WTC11 (cell line): ENCODE measurements at regions of chr1 and their contacts with region 1.

Region 1: DNA sequence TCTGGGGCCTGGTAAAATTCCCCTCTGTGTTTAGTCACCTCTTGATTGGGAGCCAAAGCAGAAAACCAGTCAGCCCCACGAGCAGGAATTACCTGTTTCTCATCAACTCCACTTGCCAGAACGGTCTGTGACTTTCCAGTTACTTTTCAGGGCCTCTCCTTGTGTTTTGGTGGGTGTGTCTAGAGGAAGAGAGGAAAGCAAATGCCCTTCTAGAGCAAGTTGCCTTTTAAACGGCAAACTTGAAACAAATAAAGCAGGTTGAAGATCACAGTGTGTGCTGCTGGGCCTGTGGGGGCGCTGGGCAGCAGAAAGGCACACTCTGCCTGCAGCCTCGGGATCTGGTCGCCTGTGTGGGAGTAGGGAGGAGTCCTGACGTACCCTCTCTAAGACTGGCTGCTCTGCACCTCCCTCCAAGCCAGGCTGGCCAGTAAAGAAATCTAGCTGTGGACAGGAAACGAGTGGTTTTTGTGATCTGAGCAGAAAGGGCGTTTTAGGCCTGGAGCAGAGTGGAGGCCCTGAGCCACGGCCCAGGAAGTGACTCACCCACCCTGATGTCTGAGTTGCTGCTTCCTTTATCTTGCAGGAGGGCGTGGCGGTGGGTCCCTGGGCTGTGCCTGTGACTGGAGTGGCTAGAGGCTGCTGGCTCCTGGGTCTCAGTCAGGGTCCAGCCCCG is 11.1 kb upstream of the S100A11 start:
- DNase-seq: peak; percentile 79
- ATAC-seq: peak; percentile 91
- H3K4me3 Mint-ChIP-seq: peak overlapping the region; percentile 63
- H3K27ac Mint-ChIP-seq: peak overlapping the region; percentile 99
- H3K4me1 Mint-ChIP-seq: peaks cover 42% of the 10 kb centered on the region
- H3K27me3 Mint-ChIP-seq: peaks cover 8% of the 10 kb centered on the region; the same call in 1 of the 2 replicates
- CTCF ChIP-seq: no peak

Region 2: GRCh38 chr1:151924679-151925587 is 122.9 kb before region 1 on chr1:
- CTCF ChIA-PET with region 1: no interaction called
- POLR2A ChIA-PET with region 1: no interaction called
- DNase-seq: no peak
- ATAC-seq: no peak
- H3K4me3 Mint-ChIP-seq: no peak overlapping the region
- H3K27ac Mint-ChIP-seq: 0 out of 2 replicates have a peak overlapping the region, but pooled peaks have one; percentile 21
- H3K4me1 Mint-ChIP-seq: peaks cover 19% of the 10 kb centered on the region
- H3K27me3 Mint-ChIP-seq: no peaks in the 10 kb centered on the region
- CTCF ChIP-seq: no peak

Region 3: DNA sequence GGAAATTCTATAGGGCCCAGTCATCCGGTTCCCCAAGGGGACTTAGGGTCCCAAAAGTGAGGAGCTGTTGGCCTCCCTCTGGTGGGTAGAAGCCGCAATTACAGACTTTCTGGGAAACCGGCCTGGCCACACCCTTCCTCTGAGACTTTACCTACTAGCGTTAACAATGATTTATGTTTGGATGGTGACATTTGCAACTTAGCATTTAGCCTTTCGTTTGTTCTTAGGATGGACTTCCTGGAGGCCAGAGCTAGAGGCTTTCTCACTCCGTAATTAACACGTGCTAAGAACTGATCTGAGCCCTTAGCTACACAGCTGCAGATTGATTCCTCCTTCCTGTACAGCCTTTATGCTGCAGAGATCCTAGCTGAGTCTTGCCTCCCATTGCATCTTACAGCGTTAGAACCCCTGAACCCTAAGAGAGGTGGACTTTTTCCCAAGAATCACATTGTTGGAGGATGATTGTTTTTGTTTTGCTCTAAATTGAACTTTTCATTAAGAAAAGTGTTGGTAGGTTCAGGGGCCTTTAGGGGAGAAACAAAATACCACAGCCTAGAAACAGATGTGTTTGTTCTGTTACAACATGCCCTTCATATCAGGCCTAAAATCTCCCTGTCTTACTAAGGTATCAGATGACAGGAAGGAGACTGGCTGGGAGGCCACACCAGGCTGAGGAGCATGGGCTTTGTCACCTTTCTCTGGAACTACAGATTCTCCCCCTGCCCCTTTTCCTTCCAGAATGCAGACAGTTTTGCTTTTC is 13.0 kb before region 1 on chr1:
- CTCF ChIA-PET with region 1: interaction called, 24 read pairs
- POLR2A ChIA-PET with region 1: interaction called, 5 read pairs
- DNase-seq: peak; percentile 76
- ATAC-seq: peak; percentile 71
- H3K4me3 Mint-ChIP-seq: peak overlapping the region; percentile 89
- H3K27ac Mint-ChIP-seq: peak overlapping the region; percentile 85
- H3K4me1 Mint-ChIP-seq: peaks cover 40% of the 10 kb centered on the region
- H3K27me3 Mint-ChIP-seq: peaks cover 9% of the 10 kb centered on the region
- CTCF ChIP-seq: peak; percentile 88

Region 4: GRCh38 chr1:152067150-152067549 is 19.3 kb after region 1 on chr1:
- CTCF ChIA-PET with region 1: interaction called, 19 read pairs
- POLR2A ChIA-PET with region 1: interaction called, 8 read pairs
- DNase-seq: no peak
- ATAC-seq: no peak
- H3K4me3 Mint-ChIP-seq: no peak overlapping the region
- H3K27ac Mint-ChIP-seq: no peak overlapping the region
- H3K4me1 Mint-ChIP-seq: peaks cover 18% of the 10 kb centered on the region
- H3K27me3 Mint-ChIP-seq: peaks cover 14% of the 10 kb centered on the region
- CTCF ChIP-seq: no peak

Region 5: GRCh38 chr1:152110860-152111514 is 63.1 kb after region 1 on chr1:
- CTCF ChIA-PET with region 1: interaction called, 41 read pairs
- POLR2A ChIA-PET with region 1: interaction called, 4 read pairs
- DNase-seq: peak; percentile 34
- ATAC-seq: peak; percentile 14
- H3K4me3 Mint-ChIP-seq: no peak overlapping the region
- H3K27ac Mint-ChIP-seq: no peak overlapping the region
- H3K4me1 Mint-ChIP-seq: no peaks in the 10 kb centered on the region; the same call in 1 of the 2 replicates
- H3K27me3 Mint-ChIP-seq: no peaks in the 10 kb centered on the region; the same call in 1 of the 2 replicates
- CTCF ChIP-seq: no peak

Region 6: DNA sequence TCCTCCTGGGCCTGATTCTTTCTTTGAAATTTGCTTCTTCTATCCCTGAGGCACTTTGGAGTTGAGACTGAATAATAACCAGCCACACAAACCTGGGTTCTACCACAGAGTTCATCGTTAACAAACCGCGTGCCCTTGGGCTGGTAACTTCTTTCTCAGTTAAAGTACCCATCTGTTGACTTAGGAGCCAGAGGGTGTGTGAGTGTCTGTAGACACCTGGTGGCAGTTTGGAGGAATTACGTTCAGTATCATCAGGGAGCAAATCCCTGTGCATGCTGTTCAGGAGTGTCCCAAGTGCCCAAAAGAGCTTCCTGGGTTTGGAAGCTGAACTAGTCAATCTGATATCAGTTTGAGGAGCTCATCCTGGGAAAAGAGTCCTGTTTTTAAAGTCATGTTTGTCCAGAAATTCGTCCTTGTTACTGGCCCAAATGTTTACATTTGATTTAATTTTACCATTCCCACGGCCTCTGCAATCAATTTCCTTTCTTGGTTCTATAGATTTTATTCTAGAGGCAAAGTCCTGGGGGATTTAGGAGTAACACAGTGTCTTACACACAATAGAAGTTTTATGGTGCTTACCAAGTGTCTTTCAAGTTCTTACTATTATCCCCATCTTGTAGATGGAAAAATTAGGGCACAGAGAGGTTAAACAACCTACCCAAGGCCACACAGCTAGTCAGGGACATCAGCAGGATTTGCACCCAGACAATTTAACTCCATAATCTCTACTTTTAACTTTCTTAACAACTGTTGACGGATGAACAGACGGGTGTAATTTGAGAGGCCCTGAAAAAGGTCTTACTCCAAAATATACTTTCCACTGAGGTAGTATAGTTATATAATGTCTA is 137.9 kb after region 1 on chr1:
- CTCF ChIA-PET with region 1: interaction called, 66 read pairs
- POLR2A ChIA-PET with region 1: no interaction called
- DNase-seq: peak; percentile 14
- ATAC-seq: peak; percentile 91
- H3K4me3 Mint-ChIP-seq: no peak overlapping the region
- H3K27ac Mint-ChIP-seq: no peak overlapping the region
- H3K4me1 Mint-ChIP-seq: no peaks in the 10 kb centered on the region
- H3K27me3 Mint-ChIP-seq: peaks cover 6% of the 10 kb centered on the region
- CTCF ChIP-seq: peak; percentile 29; the same call in 1 of the 2 replicates

Region 7: GRCh38 chr1:152459596-152460528 is 412.0 kb after region 1 on chr1:
- CTCF ChIA-PET with region 1: interaction called, 13 read pairs
- POLR2A ChIA-PET with region 1: no interaction called
- DNase-seq: peak; percentile 47
- ATAC-seq: peak; percentile 34; the same call in 1 of the 2 replicates
- H3K4me3 Mint-ChIP-seq: no peak overlapping the region
- H3K27ac Mint-ChIP-seq: no peak overlapping the region
- H3K4me1 Mint-ChIP-seq: no peaks in the 10 kb centered on the region
- H3K27me3 Mint-ChIP-seq: no peaks in the 10 kb centered on the region; the same call in 1 of the 2 replicates
- CTCF ChIP-seq: peak; percentile 34